OCI-LY7 (cell line): ENCODE measurements at regions of chr15 and their contacts with region 1.

Region 1: DNA sequence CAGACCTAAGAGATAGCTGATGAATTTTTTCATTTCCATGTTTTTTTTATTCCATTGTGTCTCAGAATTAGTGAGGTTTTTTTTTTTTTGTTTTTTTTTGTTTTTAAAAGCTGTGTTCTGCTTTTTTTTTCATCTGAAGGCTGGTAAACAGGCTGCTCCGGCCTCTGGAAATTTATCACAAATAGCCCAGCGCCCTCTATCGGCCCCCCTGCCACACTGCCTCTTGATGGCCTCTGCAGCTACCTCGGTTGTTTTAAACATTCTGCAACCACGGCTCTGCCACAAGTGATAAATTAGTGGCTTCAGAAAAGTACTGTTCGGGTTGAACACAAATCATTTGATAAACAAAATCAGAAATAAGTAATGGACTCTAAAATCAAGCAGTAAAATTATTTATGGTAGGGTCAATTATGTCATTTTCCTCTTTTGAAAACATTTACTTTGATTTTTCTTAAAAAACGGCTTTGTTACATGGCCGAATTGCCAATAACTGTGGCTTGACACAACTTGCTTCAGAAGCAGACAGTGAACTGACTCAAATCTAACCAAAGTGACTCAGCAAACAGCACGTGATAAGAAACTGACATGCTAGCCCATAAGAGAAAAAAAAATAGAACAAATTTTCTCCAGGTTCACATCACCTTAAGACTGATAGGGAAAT is 87.8 kb downstream of the RSL24D1 start:
- DNase-seq: peak; percentile 58
- H3K4me3 ChIP-seq: no peak overlapping the region
- H3K27ac ChIP-seq: no peak overlapping the region
- H3K4me1 ChIP-seq: no peaks in the 10 kb centered on the region
- CTCF ChIP-seq: peak; percentile 94

Region 2: DNA sequence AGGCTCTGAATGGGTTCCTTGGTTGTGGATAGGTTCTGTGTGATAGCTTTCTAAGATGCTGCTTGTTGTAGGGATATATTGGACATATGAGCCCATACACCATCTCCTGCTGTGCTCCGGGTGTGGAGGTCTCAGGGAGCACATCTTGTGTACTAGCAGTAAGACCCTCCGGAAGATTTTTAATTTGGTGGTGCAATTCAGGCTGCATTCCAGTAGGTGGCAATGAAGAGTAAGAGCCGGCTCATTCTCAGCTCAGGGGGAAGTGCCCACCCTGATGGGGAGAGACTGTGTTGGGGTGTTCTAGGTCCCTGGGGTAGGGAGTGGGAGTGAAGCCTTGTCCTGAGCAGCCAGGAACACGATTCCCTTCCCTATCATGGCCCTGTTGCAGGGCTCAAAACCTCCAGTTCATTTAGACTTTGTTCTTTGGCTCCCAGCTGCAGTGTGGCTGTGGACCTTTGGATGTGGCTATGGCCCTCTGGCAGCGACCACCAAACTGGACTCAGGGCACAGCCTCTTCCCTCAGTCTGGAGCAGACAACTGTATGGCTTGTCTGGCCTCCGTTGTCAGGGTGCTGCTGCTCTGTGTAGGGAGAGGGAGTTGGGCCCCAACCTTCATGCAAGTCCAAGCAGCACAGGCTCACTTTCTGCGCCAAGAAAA is 1026.0 kb before region 1 on chr15:
- CTCF ChIA-PET with region 1: no interaction called
- POLR2A ChIA-PET with region 1: no interaction called
- intact Hi-C with region 1: loop called (anchors 5 kb)
- DNase-seq: peak; percentile 32
- H3K4me3 ChIP-seq: no peak overlapping the region
- H3K27ac ChIP-seq: no peak overlapping the region
- H3K4me1 ChIP-seq: no peaks in the 10 kb centered on the region
- CTCF ChIP-seq: peak; percentile 84

Region 3: GRCh38 chr15:55088207-55088606 is 20.8 kb before region 1 on chr15:
- CTCF ChIA-PET with region 1: no interaction called
- POLR2A ChIA-PET with region 1: no interaction called
- intact Hi-C with region 1: no loop called
- DNase-seq: no peak
- H3K4me3 ChIP-seq: no peak overlapping the region
- H3K27ac ChIP-seq: no peak overlapping the region
- H3K4me1 ChIP-seq: no peaks in the 10 kb centered on the region
- CTCF ChIP-seq: no peak